Posterior vena cava (tissue), 2 donors: ENCODE measurements at regions of chr10 and their contacts with region 1.

Region 1: DNA sequence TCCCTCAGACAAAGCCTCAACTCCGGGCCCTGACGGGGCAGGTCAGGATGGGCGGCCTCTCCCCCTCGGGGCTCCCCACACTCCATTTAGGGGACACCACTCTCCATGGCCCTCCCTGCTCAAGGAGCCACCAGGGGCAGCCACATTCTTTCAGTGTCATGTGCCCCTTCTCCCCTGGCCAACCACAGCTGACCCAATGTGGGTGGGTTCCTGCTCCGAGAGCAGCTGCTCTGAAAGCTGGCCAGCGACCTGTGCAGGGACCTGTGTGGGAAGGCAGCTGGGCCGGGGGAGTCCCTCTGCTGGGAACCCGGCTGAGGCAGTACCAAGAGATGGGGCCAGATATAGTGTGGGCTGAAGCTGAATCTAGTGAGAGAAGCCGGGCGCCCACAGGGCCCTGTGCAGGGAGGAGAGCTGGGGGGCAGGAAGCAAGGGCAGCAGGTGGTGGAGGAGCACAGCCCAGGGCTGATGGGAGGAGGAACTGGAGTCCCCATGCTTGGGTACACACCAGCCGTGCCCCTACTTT is 40.6 kb upstream of the NPFFR1 start:
- DNase-seq: peak; percentile 76

Region 2: DNA sequence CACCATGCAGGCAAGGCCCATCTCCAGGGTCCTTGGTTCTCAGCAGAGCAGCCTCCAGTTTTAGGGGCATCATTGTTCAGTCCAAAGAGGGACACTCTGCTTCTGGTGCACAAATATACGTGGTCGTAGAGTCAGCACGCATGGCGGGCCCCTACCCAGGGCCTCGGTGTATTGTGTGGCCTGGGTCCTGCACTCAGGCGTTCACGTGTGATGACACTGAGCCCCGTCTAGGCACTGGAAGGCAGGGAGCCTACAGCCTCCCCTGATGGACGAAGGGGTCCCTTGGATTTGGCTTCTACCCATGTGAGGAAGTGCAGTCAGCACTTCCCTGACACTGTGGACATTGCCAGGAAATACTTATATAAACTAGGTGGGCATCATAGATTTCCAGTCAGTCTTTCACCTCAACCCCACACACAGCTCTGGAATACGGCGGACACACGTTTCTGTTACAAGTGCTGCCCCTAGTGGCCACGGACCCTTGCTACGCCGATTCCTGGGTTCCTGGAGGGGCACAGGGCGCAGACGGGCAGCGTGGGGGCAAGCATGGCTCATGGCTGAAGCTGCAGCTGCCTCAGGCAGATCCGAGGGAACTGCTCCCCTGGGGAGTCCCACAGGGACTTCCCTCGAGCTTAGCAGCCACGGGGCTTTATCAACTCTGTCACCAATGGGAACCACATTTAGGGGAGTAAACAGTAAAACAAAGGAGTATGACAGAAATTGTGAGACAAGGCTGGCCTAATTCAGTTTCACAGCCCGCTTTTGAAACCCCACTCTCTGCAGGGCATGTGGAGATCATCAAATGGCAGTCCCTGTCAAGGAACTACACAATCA is 217.2 kb before region 1 on chr10:
- intact Hi-C with region 1: loop called in 1 of 2 experiments (anchors 5 kb)
- DNase-seq: no peak

Region 3: DNA sequence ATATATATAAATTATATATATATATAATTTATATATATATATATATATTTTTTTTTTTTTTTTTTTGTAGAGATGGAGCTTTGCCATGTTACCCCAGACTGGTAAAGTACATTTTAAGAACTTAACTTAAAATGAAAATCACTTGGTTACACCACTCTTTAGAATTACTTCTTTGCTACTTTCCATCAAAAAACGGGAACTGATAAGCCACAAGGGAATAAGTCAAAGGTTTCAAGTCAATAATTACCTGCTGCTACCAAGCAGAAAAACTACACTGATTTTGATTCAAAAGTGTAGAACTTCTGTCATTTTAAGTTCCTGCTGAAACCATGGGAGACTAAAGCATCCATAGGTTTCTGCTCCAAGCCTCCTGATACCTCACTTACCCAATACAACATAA is 103.4 kb before region 1 on chr10:
- intact Hi-C with region 1: no loop called
- DNase-seq: no peak